ENCODE measurements at regions of chr10 and their contacts with region 1.

Region 1: GRCh38 chr10:98045785-98046389 is 15.5 kb upstream of the CRTAC1 start:
- DNase-seq: peak; percentile 68
- H3K4me3 ChIP-seq: no peak overlapping the region
- H3K27ac ChIP-seq: no peak overlapping the region
- H3K4me1 ChIP-seq: no peaks in the 10 kb centered on the region
- H3K27me3 ChIP-seq: peaks cover 61% of the 10 kb centered on the region
- CTCF ChIP-seq: peak; percentile 88

Region 2: GRCh38 chr10:97701438-97702069 is 344.3 kb before region 1 on chr10:
- CTCF ChIA-PET with region 1: interaction called, 8 read pairs
- POLR2A ChIA-PET with region 1: no interaction called
- intact Hi-C with region 1: loop called (anchors 10 kb)
- DNase-seq: peak; percentile 81
- H3K4me3 ChIP-seq: no peak overlapping the region
- H3K27ac ChIP-seq: no peak overlapping the region
- H3K4me1 ChIP-seq: no peaks in the 10 kb centered on the region
- H3K27me3 ChIP-seq: no peaks in the 10 kb centered on the region
- CTCF ChIP-seq: peak; percentile 88

Region 3: DNA sequence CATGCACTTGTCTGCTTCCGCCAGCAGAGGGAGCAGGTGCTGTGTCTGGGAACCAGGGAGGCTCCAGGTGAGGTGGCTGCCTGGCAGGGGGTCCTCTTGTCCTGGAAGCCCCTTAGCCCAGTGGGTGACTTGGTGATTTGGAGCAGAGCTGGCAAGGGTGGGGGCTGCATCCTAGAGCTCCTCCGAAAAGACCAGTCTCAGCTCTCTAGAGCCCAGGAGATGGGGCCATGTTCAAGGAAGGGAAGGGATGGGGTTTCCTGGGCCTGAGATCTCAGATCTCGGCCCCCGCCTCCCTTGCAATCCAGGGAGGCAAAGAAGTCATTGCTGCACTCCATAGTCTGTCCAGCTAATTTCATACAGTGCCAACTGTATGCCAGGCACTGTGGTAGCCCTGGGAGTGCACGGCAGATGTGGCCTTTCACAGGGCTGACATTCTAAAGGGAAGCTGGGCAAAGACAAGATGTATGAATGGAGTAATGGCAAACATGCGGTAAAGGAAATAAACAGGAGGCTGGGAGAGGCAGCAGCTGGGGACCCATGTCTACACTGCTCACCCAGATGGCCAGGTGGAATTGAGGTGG is 253.7 kb before region 1 on chr10:
- CTCF ChIA-PET with region 1: no interaction called
- POLR2A ChIA-PET with region 1: no interaction called
- intact Hi-C with region 1: loop called (anchors 10 kb)
- DNase-seq: peak; percentile 63
- H3K4me3 ChIP-seq: no peak overlapping the region
- H3K27ac ChIP-seq: no peak overlapping the region
- H3K4me1 ChIP-seq: no peaks in the 10 kb centered on the region
- H3K27me3 ChIP-seq: no peaks in the 10 kb centered on the region
- CTCF ChIP-seq: peak; percentile 94

Region 4: GRCh38 chr10:97876402-97876801 is 169.5 kb before region 1 on chr10:
- CTCF ChIA-PET with region 1: interaction called, 12 read pairs
- POLR2A ChIA-PET with region 1: no interaction called
- intact Hi-C with region 1: no loop called
- DNase-seq: no peak
- H3K4me3 ChIP-seq: no peak overlapping the region
- H3K27ac ChIP-seq: no peak overlapping the region
- H3K4me1 ChIP-seq: no peaks in the 10 kb centered on the region
- H3K27me3 ChIP-seq: no peaks in the 10 kb centered on the region
- CTCF ChIP-seq: no peak

Region 5: DNA sequence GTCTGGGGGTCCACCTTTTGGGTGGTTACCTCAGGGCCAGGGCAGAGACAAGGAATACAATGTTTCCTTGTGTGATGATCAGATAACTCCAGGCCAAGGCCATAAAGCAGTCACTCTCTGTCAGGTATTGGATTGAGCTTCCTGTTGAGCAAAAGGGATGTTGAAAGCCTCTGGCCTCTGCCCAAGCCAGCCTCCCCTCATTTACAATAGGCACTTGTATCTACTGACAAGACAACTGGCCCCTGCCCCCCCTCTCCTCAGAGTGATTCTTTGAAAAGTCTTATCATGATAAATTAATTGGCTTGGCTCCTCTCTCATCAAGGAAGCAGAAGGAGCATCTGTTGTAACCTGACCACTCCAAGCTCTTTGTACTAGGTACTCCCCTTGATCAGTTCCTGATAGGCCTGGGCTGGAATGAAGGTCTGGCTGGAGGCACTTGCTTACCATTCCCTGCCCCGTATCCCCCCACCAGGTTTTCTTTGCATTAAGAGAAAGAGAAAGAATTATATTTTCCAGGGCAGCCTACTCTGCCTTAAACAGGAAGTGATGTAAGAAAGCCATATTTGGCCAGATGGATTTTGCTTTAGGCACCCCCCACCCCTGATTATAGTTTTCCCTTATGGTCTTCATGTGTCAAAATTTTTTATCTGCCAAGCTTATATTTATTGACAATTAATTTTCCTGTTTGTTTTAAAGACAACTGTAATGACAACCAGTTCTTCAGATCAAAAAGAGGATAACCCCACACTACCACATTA is 443.0 kb after region 1 on chr10:
- CTCF ChIA-PET with region 1: no interaction called
- POLR2A ChIA-PET with region 1: no interaction called
- intact Hi-C with region 1: no loop called
- DNase-seq: no peak
- H3K4me3 ChIP-seq: no peak overlapping the region
- H3K27ac ChIP-seq: no peak overlapping the region
- H3K4me1 ChIP-seq: no peaks in the 10 kb centered on the region
- H3K27me3 ChIP-seq: peaks cover 15% of the 10 kb centered on the region
- CTCF ChIP-seq: no peak